Lower leg skin (tissue), 4 donors: ENCODE measurements at regions of chr18 and their contacts with region 1.

Region 1: GRCh38 chr18:70200286-70200685 is 5.2 kb downstream of the RTTN start:
- DNase-seq: no peak
- H3K4me3 ChIP-seq: no peak overlapping the region
- CTCF ChIP-seq: no peak
- POLR2A ChIP-seq: no peak

Region 2: GRCh38 chr18:70431203-70431624 is 230.9 kb after region 1 on chr18:
- intact Hi-C with region 1: loop called (anchors 5 kb)
- DNase-seq: no peak
- H3K4me3 ChIP-seq: no peak overlapping the region
- CTCF ChIP-seq: no peak
- POLR2A ChIP-seq: no peak